BJ (cell line): ENCODE measurements at regions of chr12 and their contacts with region 1.

Region 1: DNA sequence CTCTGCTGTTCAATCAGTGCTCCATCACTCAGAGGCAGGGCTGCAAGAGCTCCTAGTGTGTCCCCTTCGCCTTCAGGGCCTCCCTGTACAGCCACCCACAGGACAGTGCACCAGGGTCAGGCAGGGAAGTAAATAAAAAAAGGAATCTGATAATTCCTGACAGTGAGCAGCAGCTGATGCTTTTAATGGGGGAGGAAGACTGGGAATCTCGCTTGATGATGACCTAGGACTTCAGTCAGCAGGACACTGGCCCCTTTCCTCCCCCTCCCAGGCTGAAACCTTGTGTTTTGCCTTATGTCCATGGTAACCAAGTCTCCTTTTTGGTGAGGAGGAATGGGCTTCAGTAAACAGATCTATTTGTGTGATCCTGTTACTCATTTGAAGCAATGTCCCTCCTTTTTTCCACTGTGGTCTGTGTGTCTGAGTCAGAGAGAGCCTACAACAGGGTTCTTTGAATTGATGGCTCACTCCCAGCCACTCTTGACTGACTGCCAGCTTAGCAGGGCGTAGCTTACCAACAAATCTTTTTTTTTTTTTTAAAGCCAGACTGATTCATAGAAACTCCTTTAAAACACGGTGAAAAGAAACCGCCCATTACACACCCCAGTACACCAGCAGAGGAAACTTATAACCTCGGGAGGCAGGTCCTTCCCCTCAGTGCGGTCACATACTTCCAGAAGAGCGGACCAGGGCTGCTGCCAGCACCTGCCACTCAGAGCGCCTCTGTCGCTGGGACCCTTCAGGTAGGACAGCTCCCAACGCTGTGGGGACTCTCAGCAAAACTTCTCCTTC is at the start of gene EMP1:
- DNase-seq: peak; percentile 100
- H3K4me3 ChIP-seq: peak within 1 kb of the TSS; percentile 60
- H3K27me3 ChIP-seq: no peaks in the 10 kb centered on the region
- CTCF ChIP-seq: no peak
- polyA plus RNA-seq, gene EMP1: 228 and 258 TPM in 2 replicates

Region 2: DNA sequence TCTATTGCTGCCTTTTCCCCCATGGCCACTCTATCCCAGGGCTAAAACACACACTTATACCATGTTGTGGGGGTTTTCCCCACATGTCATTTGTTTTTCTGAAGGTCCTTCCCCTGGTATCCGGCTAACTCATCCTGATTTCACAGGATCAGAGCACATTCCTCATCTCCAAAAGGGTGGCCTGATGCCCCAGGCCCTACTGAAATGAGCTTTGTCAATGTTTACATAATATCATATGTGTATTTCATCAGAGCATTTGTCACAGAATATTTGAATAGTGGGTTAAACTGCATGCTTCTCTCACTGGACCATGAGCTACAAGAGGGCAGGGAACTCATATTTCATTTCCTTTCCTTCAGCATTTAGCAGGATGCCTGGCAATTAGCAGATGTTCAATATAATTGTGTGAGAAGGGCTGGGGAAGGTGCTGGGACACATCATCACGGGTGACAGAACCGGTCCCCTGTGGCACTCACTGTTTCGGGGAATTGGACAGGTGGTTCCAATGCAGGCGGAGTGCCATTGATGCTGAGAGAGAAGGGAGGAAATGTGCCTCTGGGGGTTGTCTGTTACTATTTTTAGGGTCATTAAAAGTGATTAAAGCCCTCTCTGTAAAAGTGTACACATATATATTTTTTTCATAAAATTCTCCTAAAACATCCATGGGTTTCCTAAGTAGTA is 27.0 kb after region 1 on chr12:
- CTCF ChIA-PET with region 1: no interaction called
- POLR2A ChIA-PET with region 1: interaction called, 10 read pairs
- DNase-seq: peak; percentile 86
- H3K4me3 ChIP-seq: no peak overlapping the region
- H3K27me3 ChIP-seq: no peaks in the 10 kb centered on the region
- CTCF ChIP-seq: no peak

Region 3: DNA sequence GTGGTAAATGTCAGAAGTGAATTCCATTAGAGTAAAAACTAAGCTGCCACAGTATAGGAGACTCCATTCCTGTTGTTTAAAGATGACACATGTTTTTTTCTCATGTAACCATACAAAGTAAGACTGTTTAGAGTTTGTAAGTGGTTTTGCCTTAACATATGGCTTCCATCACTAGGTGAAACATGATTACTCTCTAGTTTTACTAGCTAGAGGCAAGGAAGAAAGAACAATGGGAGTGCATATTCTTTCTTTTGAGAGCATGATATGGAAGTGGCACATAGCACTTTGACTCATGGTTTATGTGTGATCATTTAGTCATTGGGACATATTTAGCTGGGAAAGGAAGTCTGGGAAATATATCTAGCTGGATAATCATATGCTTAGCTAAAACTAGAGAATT is 1176.9 kb after region 1 on chr12:
- CTCF ChIA-PET with region 1: no interaction called
- POLR2A ChIA-PET with region 1: interaction called, 11 read pairs
- DNase-seq: no peak
- H3K4me3 ChIP-seq: no peak overlapping the region
- H3K27me3 ChIP-seq: no peaks in the 10 kb centered on the region
- CTCF ChIP-seq: no peak